ENCODE measurements at regions of chr22 and their contacts with region 1.

Region 1: GRCh38 chr22:17084554-17085276 is at the start of gene IL17RA:
- DNase-seq: peak; percentile 90 to 97 (median 94)
- ATAC-seq: peak; percentile 97
- H3K4me3 ChIP-seq: peak within 1 kb of the TSS; percentile 59
- H3K4me3 Mint-ChIP-seq: peak within 1 kb of the TSS; percentile 87 to 99 (median 97)
- H3K27ac ChIP-seq: peak within 1 kb of the TSS; percentile 89
- H3K27ac Mint-ChIP-seq: peak within 1 kb of the TSS; percentile 88 to 98 (median 94)
- H3K4me1 ChIP-seq: peaks cover 28 to 41% of the 10 kb centered on the region in 2 donors
- H3K4me1 Mint-ChIP-seq: peaks cover 24 to 49% (median 36%) of the 10 kb centered on the region in 7 donors
- H3K27me3 ChIP-seq: no peaks in the 10 kb centered on the region
- H3K27me3 Mint-ChIP-seq: peaks cover 0 to 8% (median 0%) of the 10 kb centered on the region in 5 donors
- total RNA-seq, gene IL17RA: 51.9 to 91.8 (median 76.5) TPM

Region 2: DNA sequence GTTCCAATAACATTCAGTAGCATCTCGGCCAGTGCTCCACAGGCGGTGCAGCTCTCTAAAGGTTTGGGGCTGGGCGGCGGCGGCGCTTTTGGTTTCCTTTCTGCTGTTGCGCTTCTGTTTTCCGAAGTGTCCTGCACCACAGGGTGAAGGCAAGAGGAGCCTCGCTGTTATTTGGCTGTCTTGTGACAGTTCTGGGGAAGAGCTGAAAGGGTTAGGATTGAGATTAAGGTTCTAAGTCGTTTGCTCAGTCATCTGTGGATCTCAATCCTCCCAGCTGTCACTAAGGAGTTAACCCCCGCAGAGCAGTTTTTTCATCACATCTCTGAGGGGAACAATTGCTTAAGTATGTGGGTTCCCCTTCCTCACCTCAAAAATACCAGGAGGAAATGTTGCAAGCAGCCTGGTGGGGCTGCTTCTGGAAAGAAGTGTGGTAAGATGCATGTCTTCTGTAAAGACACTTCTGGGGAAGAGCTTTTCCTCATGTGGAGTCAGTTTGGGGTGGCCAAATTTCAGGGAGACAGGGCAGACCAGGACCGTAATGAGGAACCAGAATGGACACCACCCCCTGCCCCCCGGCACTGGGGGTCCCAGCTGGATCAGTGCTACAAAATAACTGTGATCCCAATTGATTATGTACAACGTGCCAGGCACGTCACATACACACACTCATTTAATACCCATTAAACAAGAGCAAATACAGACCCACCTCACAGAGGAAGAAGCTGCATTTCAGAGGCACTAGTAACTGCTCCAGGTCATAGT is 22.3 kb after region 1 on chr22:
- CTCF ChIA-PET with region 1: no interaction called
- POLR2A ChIA-PET with region 1: interaction called, 114 read pairs
- intact Hi-C with region 1: loop called (anchors 1 kb)
- DNase-seq: peak in 5 of 9 donors; percentile 22 to 38 (median 24)
- ATAC-seq: peak; percentile 77
- H3K4me3 ChIP-seq: peak overlapping the region; percentile 18
- H3K4me3 Mint-ChIP-seq: peak overlapping the region; percentile 70 to 87 (median 82)
- H3K27ac ChIP-seq: peak overlapping the region; percentile 66
- H3K27ac Mint-ChIP-seq: peak overlapping the region; percentile 82 to 96 (median 90)
- H3K4me1 ChIP-seq: peaks cover 4 to 46% of the 10 kb centered on the region in 2 donors
- H3K4me1 Mint-ChIP-seq: peaks cover 37 to 77% (median 60%) of the 10 kb centered on the region in 7 donors
- H3K27me3 ChIP-seq: no peaks in the 10 kb centered on the region
- H3K27me3 Mint-ChIP-seq: no peaks in the 10 kb centered on the region

Region 3: GRCh38 chr22:17158568-17159503 is 74.1 kb after region 1 on chr22 and contains the start of gene HDHD5:
- CTCF ChIA-PET with region 1: no interaction called
- POLR2A ChIA-PET with region 1: interaction called, 7 read pairs
- intact Hi-C with region 1: loop called (anchors 1 kb)
- DNase-seq: peak; percentile 71 to 87 (median 84)
- ATAC-seq: peak; percentile 96
- H3K4me3 ChIP-seq: peak within 1 kb of the TSS; percentile 79
- H3K4me3 Mint-ChIP-seq: peak within 1 kb of the TSS; percentile 80 to 91 (median 88)
- H3K27ac ChIP-seq: peak within 1 kb of the TSS; percentile 79
- H3K27ac Mint-ChIP-seq: peak within 1 kb of the TSS in 8 of 9 donors; percentile 36 to 88 (median 76)
- H3K4me1 ChIP-seq: peaks cover 18 to 26% of the 10 kb centered on the region in 2 donors
- H3K4me1 Mint-ChIP-seq: peaks cover 18 to 48% (median 36%) of the 10 kb centered on the region in 7 donors
- H3K27me3 ChIP-seq: no peaks in the 10 kb centered on the region
- H3K27me3 Mint-ChIP-seq: no peaks in the 10 kb centered on the region
- total RNA-seq, gene HDHD5: 18.8 to 50.9 (median 26.2) TPM

Region 4: GRCh38 chr22:17368554-17369438 is 284.1 kb after region 1 on chr22:
- CTCF ChIA-PET with region 1: no interaction called
- POLR2A ChIA-PET with region 1: no interaction called
- intact Hi-C with region 1: loop called in 1 of 2 experiments (anchors 10 kb)
- DNase-seq: peak in 3 of 9 donors; percentile 9 to 26 (median 16)
- ATAC-seq: peak; percentile 6
- H3K4me3 ChIP-seq: no peak overlapping the region
- H3K4me3 Mint-ChIP-seq: peak overlapping the region; percentile 75 to 86 (median 81)
- H3K27ac ChIP-seq: no peak overlapping the region
- H3K27ac Mint-ChIP-seq: peak overlapping the region in 2 of 9 donors; percentile 38 to 55
- H3K4me1 ChIP-seq: peaks cover 0 to 14% of the 10 kb centered on the region in 2 donors
- H3K4me1 Mint-ChIP-seq: peaks cover 13 to 35% (median 28%) of the 10 kb centered on the region in 7 donors
- H3K27me3 ChIP-seq: peaks cover 0 to 16% of the 10 kb centered on the region in 2 donors
- H3K27me3 Mint-ChIP-seq: peaks cover 53 to 68% (median 54%) of the 10 kb centered on the region in 5 donors

Region 5: GRCh38 chr22:17638432-17639246 is 553.9 kb after region 1 on chr22 and contains the start of gene BCL2L13:
- CTCF ChIA-PET with region 1: no interaction called
- POLR2A ChIA-PET with region 1: no interaction called
- intact Hi-C with region 1: loop called in 1 of 2 experiments (anchors 1 kb)
- DNase-seq: peak; percentile 77 to 91 (median 88)
- ATAC-seq: peak; percentile 96
- H3K4me3 ChIP-seq: peak within 1 kb of the TSS; percentile 73
- H3K4me3 Mint-ChIP-seq: peak within 1 kb of the TSS; percentile 87 to 95 (median 90)
- H3K27ac ChIP-seq: peak within 1 kb of the TSS; percentile 99
- H3K27ac Mint-ChIP-seq: peak within 1 kb of the TSS; percentile 92 to 99 (median 96)
- H3K4me1 ChIP-seq: peaks cover 12 to 18% of the 10 kb centered on the region in 2 donors
- H3K4me1 Mint-ChIP-seq: peaks cover 17 to 38% (median 34%) of the 10 kb centered on the region in 7 donors
- H3K27me3 ChIP-seq: no peaks in the 10 kb centered on the region
- H3K27me3 Mint-ChIP-seq: no peaks in the 10 kb centered on the region
- total RNA-seq, gene BCL2L13: 21.9 to 39.1 (median 32.8) TPM